Heart left ventricle (tissue), 16 donors: ENCODE measurements at regions of chr5 and their contacts with region 1.

Region 1: DNA sequence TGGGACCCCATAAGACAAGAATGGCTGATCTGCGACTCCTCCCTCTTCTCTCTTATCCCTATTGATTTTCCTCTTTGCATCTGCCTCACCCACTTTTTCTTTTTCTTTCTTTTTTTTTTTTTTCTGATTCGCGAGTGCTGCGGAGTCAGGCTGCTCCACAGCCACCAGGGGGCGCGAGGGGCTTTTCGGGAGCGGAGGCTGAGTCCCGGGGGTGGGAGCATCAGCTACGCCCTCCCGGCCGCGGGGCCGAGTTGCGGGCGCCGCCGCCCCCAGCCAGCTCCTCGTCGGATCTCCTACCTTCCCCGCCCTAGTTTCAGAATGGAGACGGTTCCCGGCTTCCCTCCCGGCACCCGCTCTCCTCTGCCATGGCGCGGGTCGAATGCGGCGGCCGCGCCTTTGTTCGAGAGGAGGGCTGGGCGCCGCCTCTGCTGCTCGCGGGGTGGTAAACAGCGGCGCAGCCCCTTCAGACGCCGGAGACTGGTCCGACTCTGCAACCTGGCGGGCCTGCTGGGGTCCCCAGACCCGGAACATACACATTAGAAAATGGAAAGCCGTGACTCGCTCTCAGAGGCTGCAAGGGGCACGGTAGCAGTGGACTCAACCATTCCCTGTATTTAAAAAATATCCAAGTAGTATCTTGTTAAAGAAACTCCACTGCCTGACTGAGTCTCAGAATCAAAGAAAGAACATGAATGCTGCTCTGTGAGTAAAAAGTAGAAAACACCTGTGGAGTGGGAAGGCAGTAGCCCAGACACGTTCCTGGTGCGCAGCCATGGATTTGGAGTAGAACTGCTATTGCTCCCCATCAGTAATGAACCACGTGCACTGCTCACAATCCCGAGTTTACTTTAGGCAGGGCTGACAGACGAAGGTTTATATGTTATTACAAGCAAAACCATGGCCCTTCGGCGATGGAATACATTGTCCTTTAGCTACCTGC is 55.7 kb downstream of the DPYSL3 start:
- DNase-seq: peak; percentile 85 to 94 (median 91)
- ATAC-seq: peak; percentile 79 to 89 (median 88)
- H3K4me3 ChIP-seq: peak overlapping the region; percentile 41 to 92 (median 72)
- H3K27ac ChIP-seq: peak overlapping the region; percentile 75 to 95 (median 86)
- H3K4me1 ChIP-seq: peaks cover 0 to 53% (median 18%) of the 10 kb centered on the region in 12 donors
- H3K27me3 ChIP-seq: peaks cover 0 to 9% (median 0%) of the 10 kb centered on the region in 9 donors
- CTCF ChIP-seq: peak; percentile 85 to 96 (median 90)
- POLR2A ChIP-seq: peak in 1 of 2 donors; percentile 33

Region 2: GRCh38 chr5:147576646-147577535 is 122.7 kb after region 1 on chr5:
- intact Hi-C with region 1: loop called in 8 of 10 experiments (anchors 1 to 5 kb)
- DNase-seq: peak in 3 of 5 donors; percentile 38 to 44 (median 41)
- ATAC-seq: peak in 3 of 4 donors; percentile 51 to 76 (median 65)
- H3K4me3 ChIP-seq: no peak overlapping the region
- H3K27ac ChIP-seq: no peak overlapping the region
- H3K4me1 ChIP-seq: peaks cover 0 to 7% (median 0%) of the 10 kb centered on the region in 12 donors
- H3K27me3 ChIP-seq: no peaks in the 10 kb centered on the region
- CTCF ChIP-seq: peak; percentile 77 to 89 (median 84)
- POLR2A ChIP-seq: no peak

Region 3: GRCh38 chr5:147756566-147756965 is 302.4 kb after region 1 on chr5:
- intact Hi-C with region 1: no loop called
- DNase-seq: no peak
- ATAC-seq: no peak
- H3K4me3 ChIP-seq: no peak overlapping the region
- H3K27ac ChIP-seq: no peak overlapping the region
- H3K4me1 ChIP-seq: no peaks in the 10 kb centered on the region
- H3K27me3 ChIP-seq: no peaks in the 10 kb centered on the region
- CTCF ChIP-seq: no peak
- POLR2A ChIP-seq: no peak